OCI-LY7 (cell line): ENCODE measurements at regions of chr5 and their contacts with region 1.

Region 1: GRCh38 chr5:106312358-106312757 is 1358.4 kb downstream of the EFNA5 start:
- DNase-seq: no peak
- H3K4me3 ChIP-seq: no peak overlapping the region
- H3K27ac ChIP-seq: no peak overlapping the region
- H3K4me1 ChIP-seq: no peaks in the 10 kb centered on the region
- CTCF ChIP-seq: no peak

Region 2: DNA sequence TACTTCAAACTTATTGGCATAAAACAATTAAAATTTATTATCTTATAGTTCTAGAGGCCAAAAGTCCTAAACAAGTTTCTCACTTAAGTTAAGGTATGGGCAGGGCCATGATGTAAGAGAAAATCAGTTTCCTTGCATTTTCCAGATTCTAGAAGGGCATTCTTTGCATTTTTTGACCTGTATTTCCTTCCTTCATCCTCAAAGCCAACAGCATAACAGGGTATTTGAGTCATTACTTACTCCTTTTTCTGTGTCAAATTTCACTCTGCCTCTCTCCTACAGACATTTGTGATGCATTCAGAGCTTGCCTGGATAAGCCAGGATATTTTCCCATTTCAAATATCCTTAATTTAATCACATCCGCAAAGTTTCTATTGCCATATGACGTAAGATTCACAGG is 140.7 kb before region 1 on chr5:
- CTCF ChIA-PET with region 1: no interaction called
- POLR2A ChIA-PET with region 1: no interaction called
- intact Hi-C with region 1: no loop called
- DNase-seq: no peak
- H3K4me3 ChIP-seq: no peak overlapping the region
- H3K27ac ChIP-seq: no peak overlapping the region
- H3K4me1 ChIP-seq: no peaks in the 10 kb centered on the region
- CTCF ChIP-seq: no peak

Region 3: DNA sequence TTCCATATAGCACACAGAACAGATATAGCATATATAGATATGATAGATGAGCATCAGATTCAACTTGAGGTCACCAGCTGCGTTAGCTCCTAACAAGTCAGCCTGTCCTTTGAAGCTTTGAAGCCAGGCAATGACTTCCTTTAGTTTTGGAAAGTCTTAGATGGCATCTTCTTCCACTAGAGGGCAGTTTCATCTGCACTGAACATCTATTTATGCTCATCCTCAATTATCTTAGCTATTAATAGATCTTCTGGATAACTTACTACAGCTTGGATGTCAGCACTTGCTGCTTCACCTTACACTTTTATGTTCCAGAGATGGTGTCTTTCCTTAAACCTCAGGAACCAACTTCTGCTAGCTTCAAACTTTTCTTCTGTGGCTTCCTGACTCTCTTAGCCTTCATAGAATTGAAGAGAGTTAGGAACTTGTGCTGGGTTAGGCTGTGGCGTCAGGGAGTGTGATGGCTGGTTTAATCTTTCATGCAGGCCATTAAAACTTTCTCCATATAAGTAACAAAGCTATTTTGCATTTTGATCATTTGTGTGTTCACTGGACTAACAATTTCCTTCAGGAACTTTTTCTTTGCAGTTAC is 43.0 kb before region 1 on chr5:
- CTCF ChIA-PET with region 1: no interaction called
- POLR2A ChIA-PET with region 1: interaction called, 10 read pairs
- intact Hi-C with region 1: no loop called
- DNase-seq: peak; percentile 18
- H3K4me3 ChIP-seq: no peak overlapping the region
- H3K27ac ChIP-seq: no peak overlapping the region
- H3K4me1 ChIP-seq: no peaks in the 10 kb centered on the region
- CTCF ChIP-seq: peak; percentile 69